ENCODE measurements at regions of chr7 and their contacts with region 1.

Region 1: GRCh38 chr7:94338921-94339371 is 55.7 kb upstream of the COL1A2 start:
- DNase-seq: peak; percentile 36
- ATAC-seq: no peak
- H3K4me3 ChIP-seq: no peak overlapping the region
- H3K27ac ChIP-seq: no peak overlapping the region
- H3K4me1 ChIP-seq: 0 out of 2 replicates have a peak, but pooled peaks cover under 1% of the 10 kb centered on the region
- H3K27me3 ChIP-seq: no peaks in the 10 kb centered on the region
- CTCF ChIP-seq: no peak

Region 2: DNA sequence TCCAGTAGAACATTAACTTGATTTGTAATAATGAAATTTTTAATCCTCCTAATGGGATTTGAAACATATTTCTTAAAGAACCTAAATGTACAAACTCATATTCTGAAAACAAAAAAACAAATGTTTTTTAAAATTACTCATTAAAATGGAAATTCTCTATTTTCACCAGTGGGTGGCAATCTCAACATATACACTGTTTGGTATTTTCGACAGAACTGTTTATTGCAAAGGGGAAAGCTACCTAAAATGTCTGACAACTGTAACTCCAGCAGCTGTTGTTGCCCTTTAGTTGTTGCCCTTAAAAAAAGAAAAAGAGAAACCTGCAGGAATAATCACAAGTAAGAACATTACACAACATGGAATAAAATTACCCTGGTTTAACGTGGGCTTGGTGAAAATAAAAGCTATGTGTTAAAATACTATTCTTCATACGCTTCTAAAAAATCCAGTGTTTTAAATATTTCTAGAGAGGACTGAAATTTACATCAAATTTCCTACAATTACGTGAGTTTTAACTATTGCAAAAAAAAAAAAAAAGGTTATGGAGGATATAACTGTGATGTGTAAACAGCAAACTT is 110.3 kb after region 1 on chr7:
- CTCF ChIA-PET with region 1: no interaction called
- POLR2A ChIA-PET with region 1: no interaction called
- intact Hi-C with region 1: no loop called
- DNase-seq: peak; percentile 58
- ATAC-seq: peak; percentile 48
- H3K4me3 ChIP-seq: no peak overlapping the region
- H3K27ac ChIP-seq: no peak overlapping the region
- H3K4me1 ChIP-seq: peaks cover 4% of the 10 kb centered on the region; the same call in 1 of the 2 replicates
- H3K27me3 ChIP-seq: no peaks in the 10 kb centered on the region
- CTCF ChIP-seq: peak; percentile 76

Region 3: DNA sequence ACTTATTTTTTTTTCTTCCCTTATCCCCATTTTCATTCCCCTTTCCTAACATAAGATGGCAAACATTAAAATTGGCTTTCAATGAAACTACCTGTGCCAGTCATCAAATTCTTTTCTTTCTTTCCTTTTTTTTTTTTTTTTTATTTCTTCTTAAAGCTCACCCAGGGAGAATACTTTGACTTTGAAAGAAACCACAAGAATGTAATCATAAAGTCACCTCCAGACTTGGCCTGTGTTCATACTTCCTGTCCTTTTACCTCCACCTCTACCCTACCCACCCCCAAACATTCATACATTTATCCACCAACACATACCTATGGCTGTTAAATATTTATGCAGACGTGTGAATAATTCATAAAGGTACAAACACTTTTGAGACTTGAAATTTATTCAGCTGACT is 1728.4 kb after region 1 on chr7:
- CTCF ChIA-PET with region 1: no interaction called
- POLR2A ChIA-PET with region 1: interaction called, 10 read pairs
- intact Hi-C with region 1: no loop called
- DNase-seq: peak; percentile 49
- ATAC-seq: peak; percentile 83
- H3K4me3 ChIP-seq: no peak overlapping the region
- H3K27ac ChIP-seq: no peak overlapping the region
- H3K4me1 ChIP-seq: peaks cover 25% of the 10 kb centered on the region
- H3K27me3 ChIP-seq: no peaks in the 10 kb centered on the region
- CTCF ChIP-seq: no peak

Measured in PC-3 (cell line).